Activated T-helper 1 cell treated with anti-CD3 and anti-CD28 coated beads, Interleukin-12 subunit alpha, Interleukin-12 subunit beta, Interleukin-2, Interleukin-4 antibody, amounts not matched to agents 30 ng/mL and 10 ng/mL and 1 ng/mL, durations not matched to agents 14 hours and 24 hours and 36 hours (primary cell): ENCODE measurements at regions of chr17 and their contacts with region 1.

Region 1: GRCh38 chr17:82648166-82648668 is at the start of gene WDR45B:
- DNase-seq: peak; percentile 90
- H3K4me3 Mint-ChIP-seq: peak within 1 kb of the TSS; percentile 89
- H3K27ac Mint-ChIP-seq: peak within 1 kb of the TSS; percentile 76
- H3K4me1 Mint-ChIP-seq: peaks cover 25% of the 10 kb centered on the region
- H3K27me3 Mint-ChIP-seq: no peaks in the 10 kb centered on the region
- total RNA-seq, gene WDR45B: 55.1 and 56.7 TPM in 2 replicates

Region 2: DNA sequence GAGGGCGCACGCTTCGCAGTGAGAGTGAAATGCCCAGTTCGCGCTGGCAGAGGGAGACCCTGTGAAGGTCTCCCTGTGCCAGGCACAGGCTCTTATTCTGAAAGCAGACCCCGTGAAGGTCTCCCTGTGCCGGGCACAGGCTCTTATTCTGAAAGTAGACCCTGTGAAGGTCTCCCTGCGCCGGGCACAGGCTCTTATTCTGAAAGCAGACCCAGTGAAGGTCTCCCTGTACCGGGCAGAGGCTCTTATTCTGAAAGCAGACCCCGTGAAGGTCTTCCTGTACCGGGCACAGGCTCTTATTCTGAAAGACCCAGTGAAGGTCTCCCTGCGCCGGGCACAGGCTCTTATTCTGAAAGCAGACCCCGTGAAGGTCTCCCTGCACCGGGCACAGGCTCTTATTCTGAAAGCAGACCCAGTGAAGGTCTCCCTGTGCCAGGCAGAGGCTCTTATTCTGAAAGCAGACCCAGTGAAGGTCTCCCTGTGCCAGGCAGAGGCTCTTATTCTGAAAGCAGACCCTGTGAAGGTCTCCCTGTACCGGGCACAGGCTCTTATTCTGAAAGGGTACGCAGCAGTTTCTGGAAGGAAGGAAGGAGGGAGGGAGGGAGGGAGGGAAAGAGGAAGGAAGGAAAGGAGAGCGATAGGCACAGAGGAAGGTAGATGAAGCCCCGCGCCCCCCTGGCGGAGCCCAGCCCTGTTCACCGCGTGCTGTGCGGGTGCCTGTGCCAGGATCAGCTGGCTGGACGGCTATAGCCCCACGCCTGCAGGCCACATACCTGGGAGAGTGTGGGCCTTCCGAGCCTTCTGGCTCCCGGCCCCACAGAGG is 55.2 kb before region 1 on chr17:
- intact Hi-C with region 1: loop called (anchors 5 kb)
- DNase-seq: peak; percentile 64
- H3K4me3 Mint-ChIP-seq: peak overlapping the region; percentile 80
- H3K27ac Mint-ChIP-seq: peak overlapping the region; percentile 90
- H3K4me1 Mint-ChIP-seq: peaks cover 38% of the 10 kb centered on the region
- H3K27me3 Mint-ChIP-seq: no peaks in the 10 kb centered on the region

Region 3: GRCh38 chr17:82698065-82698973 is 50.1 kb after region 1 on chr17 and contains the start of gene RAB40B:
- intact Hi-C with region 1: loop called (anchors 1 kb)
- DNase-seq: peak; percentile 98
- H3K4me3 Mint-ChIP-seq: peak within 1 kb of the TSS; percentile 83
- H3K27ac Mint-ChIP-seq: no peak within 1 kb of the TSS
- H3K4me1 Mint-ChIP-seq: no peaks in the 10 kb centered on the region
- H3K27me3 Mint-ChIP-seq: peaks cover 10% of the 10 kb centered on the region
- total RNA-seq, gene RAB40B: 3.6 and 5.2 TPM in 2 replicates